ENCODE measurements at regions of chr17 and their contacts with region 1.

Region 1: DNA sequence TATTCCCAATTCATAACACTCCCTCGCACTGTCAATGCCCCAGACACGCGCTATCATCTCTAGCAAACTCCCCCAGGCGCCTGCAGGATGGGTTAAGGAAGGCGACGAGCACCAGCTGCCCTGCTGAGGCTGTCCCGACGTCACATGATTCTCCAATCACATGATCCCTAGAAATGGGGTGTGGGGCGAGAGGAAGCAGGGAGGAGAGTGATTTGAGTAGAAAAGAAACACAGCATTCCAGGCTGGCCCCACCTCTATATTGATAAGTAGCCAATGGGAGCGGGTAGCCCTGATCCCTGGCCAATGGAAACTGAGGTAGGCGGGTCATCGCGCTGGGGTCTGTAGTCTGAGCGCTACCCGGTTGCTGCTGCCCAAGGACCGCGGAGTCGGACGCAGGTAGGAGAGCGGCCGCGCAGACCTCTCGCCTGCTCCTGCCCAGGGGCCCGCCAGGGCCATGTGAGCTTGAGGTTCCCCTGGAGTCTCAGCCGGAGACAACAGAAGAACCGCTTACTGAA is at the start of gene GRN:
- DNase-seq: peak; percentile 92
- ATAC-seq: peak; percentile 99
- H3K4me3 Mint-ChIP-seq: peak within 1 kb of the TSS; percentile 87
- H3K27ac Mint-ChIP-seq: peak within 1 kb of the TSS; percentile 80
- H3K4me1 Mint-ChIP-seq: peaks cover 11% of the 10 kb centered on the region
- H3K27me3 Mint-ChIP-seq: no peaks in the 10 kb centered on the region
- total RNA-seq, gene GRN: 35.4 to 68.0 TPM

Region 2: GRCh38 chr17:44141717-44142285 is 203.2 kb before region 1 on chr17 and contains the start of gene HROB:
- CTCF ChIA-PET with region 1: no interaction called
- POLR2A ChIA-PET with region 1: no interaction called
- intact Hi-C with region 1: loop called in 1 of 2 experiments (anchors 1 kb)
- DNase-seq: peak; percentile 99
- ATAC-seq: peak; percentile 83
- H3K4me3 Mint-ChIP-seq: peak within 1 kb of the TSS; percentile 91
- H3K27ac Mint-ChIP-seq: peak within 1 kb of the TSS; percentile 85
- H3K4me1 Mint-ChIP-seq: peaks cover 24% of the 10 kb centered on the region
- H3K27me3 Mint-ChIP-seq: peaks cover 2% of the 10 kb centered on the region
- total RNA-seq, gene HROB: 17.1 to 23.3 TPM

Region 3: DNA sequence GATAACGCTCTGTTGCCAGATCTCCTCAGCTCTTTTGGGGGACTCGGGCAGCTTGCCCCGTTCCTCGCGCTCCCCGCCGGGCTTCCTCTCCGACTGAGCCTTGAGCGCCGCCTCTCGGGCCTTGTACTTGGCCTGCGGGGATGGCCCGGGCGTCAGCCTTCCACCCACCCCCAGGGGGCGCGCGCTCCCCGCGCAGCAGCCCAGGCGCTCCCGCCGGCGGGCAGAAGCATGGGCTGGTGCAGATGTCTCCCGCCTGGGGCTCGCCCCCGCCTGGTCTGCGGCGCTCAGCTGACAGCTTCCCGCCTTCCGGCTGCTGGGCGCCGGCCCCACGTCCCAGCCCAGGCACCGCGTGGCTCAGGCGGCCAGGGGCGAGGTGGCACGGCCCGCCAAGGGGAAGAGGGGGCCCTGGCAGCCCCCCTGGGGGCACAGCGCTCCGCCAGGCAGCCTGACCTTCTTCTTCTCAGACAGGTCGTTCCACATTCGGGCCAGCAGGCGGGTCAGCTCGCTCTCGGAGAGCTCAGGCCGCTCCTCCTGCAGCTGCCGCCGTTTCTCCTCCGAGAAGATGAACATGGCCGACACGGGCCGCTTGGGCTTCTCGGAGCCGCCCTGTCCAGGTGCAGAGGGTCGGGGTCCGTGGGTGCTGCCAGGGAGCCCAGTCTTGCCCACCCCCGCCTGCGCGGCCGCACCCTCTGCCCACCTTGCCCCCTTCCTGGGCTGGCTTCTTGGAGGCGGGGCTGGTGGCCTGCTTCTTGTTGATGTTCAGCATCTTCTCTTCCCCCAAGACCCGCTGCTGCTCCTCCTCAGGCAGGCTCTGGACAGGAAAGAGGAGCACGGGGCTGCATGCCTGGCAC is 134.4 kb before region 1 on chr17:
- CTCF ChIA-PET with region 1: interaction called, 19 read pairs
- POLR2A ChIA-PET with region 1: interaction called, 3 read pairs
- intact Hi-C with region 1: loop called (anchors 1 to 2 kb)
- DNase-seq: peak; percentile 96
- ATAC-seq: peak; percentile 84
- H3K4me3 Mint-ChIP-seq: peak overlapping the region; percentile 79
- H3K27ac Mint-ChIP-seq: peak overlapping the region; percentile 98
- H3K4me1 Mint-ChIP-seq: peaks cover 60% of the 10 kb centered on the region
- H3K27me3 Mint-ChIP-seq: no peaks in the 10 kb centered on the region

Region 4: GRCh38 chr17:44324571-44325275 is 20.3 kb before region 1 on chr17 and contains the start of gene SLC25A39:
- CTCF ChIA-PET with region 1: interaction called, 40 read pairs
- POLR2A ChIA-PET with region 1: no interaction called
- intact Hi-C with region 1: loop called in 1 of 2 experiments (anchors 1 kb)
- DNase-seq: peak; percentile 97
- ATAC-seq: peak; percentile 74
- H3K4me3 Mint-ChIP-seq: peak within 1 kb of the TSS; percentile 84
- H3K27ac Mint-ChIP-seq: peak within 1 kb of the TSS; percentile 94
- H3K4me1 Mint-ChIP-seq: peaks cover 21% of the 10 kb centered on the region
- H3K27me3 Mint-ChIP-seq: no peaks in the 10 kb centered on the region
- total RNA-seq, gene SLC25A39: 127 to 129 TPM

Region 5: DNA sequence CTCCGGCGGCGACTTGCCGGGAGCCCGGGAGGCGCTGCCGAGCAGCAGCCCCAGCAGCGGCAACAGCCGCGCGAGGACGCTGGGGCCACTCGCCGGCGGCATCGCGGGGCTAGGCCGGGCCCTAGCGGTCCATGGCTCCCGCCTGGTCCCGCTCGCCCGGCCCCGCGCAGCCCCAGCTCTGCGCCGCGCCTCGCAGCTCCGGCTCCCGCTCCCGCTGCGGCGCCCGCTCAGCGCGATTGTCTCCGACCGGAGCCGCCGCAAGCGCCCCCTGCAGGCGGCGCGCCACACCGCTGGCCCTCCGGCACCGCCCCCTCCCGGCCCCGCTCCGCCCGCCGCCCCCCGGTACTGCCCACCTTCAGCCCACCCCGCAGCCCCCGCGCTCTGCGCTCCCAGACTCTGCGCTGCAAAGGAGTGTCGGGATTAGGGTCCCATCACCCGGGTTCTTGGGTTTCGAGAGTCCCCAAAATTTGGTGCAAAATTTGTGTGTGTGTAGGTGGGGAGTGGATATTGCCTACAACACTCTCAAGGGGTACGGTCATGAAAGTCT is 18.7 kb after region 1 on chr17 and contains the start of gene FAM171A2:
- CTCF ChIA-PET with region 1: interaction called, 25 read pairs
- POLR2A ChIA-PET with region 1: no interaction called
- intact Hi-C with region 1: loop called in 1 of 2 experiments (anchors 1 kb)
- DNase-seq: peak; percentile 84
- ATAC-seq: peak; percentile 90
- H3K4me3 Mint-ChIP-seq: peak within 1 kb of the TSS; percentile 53
- H3K27ac Mint-ChIP-seq: no peak within 1 kb of the TSS
- H3K4me1 Mint-ChIP-seq: peaks cover 2% of the 10 kb centered on the region
- H3K27me3 Mint-ChIP-seq: peaks cover 22% of the 10 kb centered on the region
- total RNA-seq, gene FAM171A2: 0.18 to 0.32 TPM